ENCODE measurements at regions of chr22 and their contacts with region 1.

Region 1: GRCh38 chr22:36180038-36180880 is 19.7 kb upstream of the APOL3 start:
- DNase-seq: peak; percentile 75 to 82 (median 80)
- H3K4me3 ChIP-seq: no peak overlapping the region
- H3K4me3 Mint-ChIP-seq: no peak overlapping the region
- H3K27ac ChIP-seq: no peak overlapping the region
- H3K27ac Mint-ChIP-seq: peak overlapping the region in 6 of 7 donors; percentile 19 to 86 (median 54)
- H3K4me1 ChIP-seq: peaks cover 5% of the 10 kb centered on the region
- H3K4me1 Mint-ChIP-seq: peaks cover 0 to 6% (median 3%) of the 10 kb centered on the region in 4 donors
- H3K27me3 ChIP-seq: no peaks in the 10 kb centered on the region
- H3K27me3 Mint-ChIP-seq: peaks cover 2 to 3% of the 10 kb centered on the region in 2 donors

Region 2: DNA sequence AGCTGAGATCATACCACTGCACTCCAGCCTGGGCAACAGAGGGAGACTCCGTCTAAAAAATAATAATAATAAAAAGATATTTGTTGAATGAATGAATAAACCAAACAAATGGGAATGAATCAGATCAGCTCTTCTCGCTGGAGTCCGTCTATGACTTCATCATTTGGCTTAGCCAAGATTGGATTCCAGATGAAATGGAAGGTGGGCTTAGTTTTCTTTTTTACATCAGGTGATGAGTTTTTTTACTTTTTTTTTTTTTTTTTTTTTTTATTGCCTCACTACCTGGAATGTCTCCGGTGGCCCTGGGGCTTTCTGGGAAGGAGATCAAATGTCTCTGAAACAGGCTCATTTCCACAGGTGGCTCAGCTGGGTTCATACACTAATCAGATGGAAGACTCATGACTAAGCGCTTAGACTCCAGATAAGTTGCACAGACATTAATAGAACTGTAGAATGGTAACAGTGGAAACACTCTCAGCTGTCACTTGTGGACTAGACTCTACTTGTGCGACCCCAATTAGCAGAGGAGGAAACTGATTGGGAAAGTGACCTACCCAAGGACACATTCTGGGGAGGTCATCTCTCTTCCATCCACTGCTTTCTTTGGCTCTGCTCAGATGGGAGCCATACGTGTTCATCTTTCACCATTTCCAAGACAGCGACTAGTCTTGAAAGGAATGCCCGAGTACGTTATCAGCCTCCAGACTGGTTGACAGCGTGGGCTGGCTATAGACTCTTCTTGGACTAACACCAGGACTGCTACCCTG is 131.2 kb before region 1 on chr22:
- CTCF ChIA-PET with region 1: no interaction called
- POLR2A ChIA-PET with region 1: no interaction called
- intact Hi-C with region 1: no loop called
- DNase-seq: no peak
- H3K4me3 ChIP-seq: no peak overlapping the region
- H3K4me3 Mint-ChIP-seq: no peak overlapping the region
- H3K27ac ChIP-seq: no peak overlapping the region
- H3K27ac Mint-ChIP-seq: peak overlapping the region in 1 of 7 donors; percentile 37
- H3K4me1 ChIP-seq: no peaks in the 10 kb centered on the region
- H3K4me1 Mint-ChIP-seq: peaks cover 0 to 2% (median under 1%) of the 10 kb centered on the region in 4 donors
- H3K27me3 ChIP-seq: no peaks in the 10 kb centered on the region
- H3K27me3 Mint-ChIP-seq: peaks cover 5 to 12% of the 10 kb centered on the region in 2 donors

Region 3: GRCh38 chr22:36123673-36124630 is 56.3 kb before region 1 on chr22:
- CTCF ChIA-PET with region 1: interaction called, 11 read pairs
- POLR2A ChIA-PET with region 1: no interaction called
- intact Hi-C with region 1: no loop called
- DNase-seq: peak; percentile 90 to 93 (median 92)
- H3K4me3 ChIP-seq: peak overlapping the region in 1 of 2 donors; percentile 59
- H3K4me3 Mint-ChIP-seq: peak overlapping the region; percentile 72 to 84 (median 80)
- H3K27ac ChIP-seq: peak overlapping the region; percentile 37
- H3K27ac Mint-ChIP-seq: peak overlapping the region; percentile 66 to 98 (median 93)
- H3K4me1 ChIP-seq: peaks cover 11% of the 10 kb centered on the region
- H3K4me1 Mint-ChIP-seq: peaks cover 3 to 18% (median 9%) of the 10 kb centered on the region in 4 donors
- H3K27me3 ChIP-seq: no peaks in the 10 kb centered on the region
- H3K27me3 Mint-ChIP-seq: no peaks in the 10 kb centered on the region

Region 4: GRCh38 chr22:36144886-36145541 is 35.2 kb before region 1 on chr22:
- CTCF ChIA-PET with region 1: interaction called, 63 read pairs
- POLR2A ChIA-PET with region 1: interaction called, 5 read pairs
- intact Hi-C with region 1: loop called (anchors 1 kb)
- DNase-seq: peak in 1 of 5 donors; percentile 26
- H3K4me3 ChIP-seq: no peak overlapping the region
- H3K4me3 Mint-ChIP-seq: no peak overlapping the region
- H3K27ac ChIP-seq: no peak overlapping the region
- H3K27ac Mint-ChIP-seq: peak overlapping the region; percentile 74 to 83 (median 79)
- H3K4me1 ChIP-seq: peaks cover 14% of the 10 kb centered on the region
- H3K4me1 Mint-ChIP-seq: peaks cover 16 to 63% (median 40%) of the 10 kb centered on the region in 4 donors
- H3K27me3 ChIP-seq: no peaks in the 10 kb centered on the region
- H3K27me3 Mint-ChIP-seq: no peaks in the 10 kb centered on the region

Region 5: GRCh38 chr22:36151006-36151595 is 29.2 kb before region 1 on chr22:
- CTCF ChIA-PET with region 1: interaction called, 23 read pairs
- POLR2A ChIA-PET with region 1: interaction called, 39 read pairs
- intact Hi-C with region 1: no loop called
- DNase-seq: no peak
- H3K4me3 ChIP-seq: no peak overlapping the region
- H3K4me3 Mint-ChIP-seq: peak overlapping the region in 6 of 8 donors; percentile 33 to 71 (median 60)
- H3K27ac ChIP-seq: no peak overlapping the region
- H3K27ac Mint-ChIP-seq: peak overlapping the region; percentile 53 to 92 (median 72)
- H3K4me1 ChIP-seq: peaks cover 75% of the 10 kb centered on the region
- H3K4me1 Mint-ChIP-seq: peaks cover 53 to 87% (median 70%) of the 10 kb centered on the region in 4 donors
- H3K27me3 ChIP-seq: no peaks in the 10 kb centered on the region
- H3K27me3 Mint-ChIP-seq: no peaks in the 10 kb centered on the region

Region 6: DNA sequence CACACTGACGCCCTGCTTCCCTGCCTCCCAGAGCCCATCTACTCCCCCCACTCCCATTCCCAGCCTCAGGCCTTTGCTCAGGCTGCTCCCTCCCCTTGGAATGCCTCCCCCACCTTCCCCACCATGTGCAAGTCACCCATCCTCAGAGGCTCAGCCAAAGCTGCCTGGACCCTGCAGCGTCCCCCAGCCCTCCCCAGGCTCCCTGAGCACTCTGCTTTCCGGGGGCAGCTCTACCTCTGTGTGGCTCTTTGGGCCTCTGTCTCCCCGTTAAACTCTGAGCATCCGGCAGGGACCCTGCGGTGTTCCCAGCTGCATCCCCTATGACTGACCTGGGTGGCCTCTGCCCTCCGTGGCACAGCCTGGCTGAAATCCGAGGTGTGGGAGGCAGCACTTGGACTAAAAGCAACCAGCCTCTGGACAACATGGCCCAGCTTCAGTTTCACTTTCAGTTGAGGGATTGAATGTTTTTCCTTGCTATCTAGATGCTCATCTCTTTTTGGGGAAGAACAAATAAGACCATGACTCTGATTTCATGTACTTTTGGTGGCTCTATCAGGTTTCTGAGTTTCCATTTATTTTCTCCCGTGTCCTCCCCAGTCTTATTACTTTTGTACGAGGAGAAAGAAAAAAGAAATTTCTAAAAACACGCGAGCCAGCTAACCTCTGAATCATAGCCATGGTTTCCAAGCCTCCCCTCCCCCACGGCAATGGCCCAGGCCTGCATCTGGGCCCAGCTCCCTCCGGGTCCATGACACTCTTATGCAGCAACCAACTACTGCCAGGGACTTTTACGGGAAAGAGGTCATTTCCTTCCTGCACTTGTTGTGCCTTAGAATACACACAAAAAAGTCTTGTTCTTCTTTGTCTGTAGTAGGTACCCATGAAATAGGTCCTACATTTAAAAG is 23.5 kb before region 1 on chr22:
- CTCF ChIA-PET with region 1: interaction called, 33 read pairs
- POLR2A ChIA-PET with region 1: interaction called, 39 read pairs
- intact Hi-C with region 1: no loop called
- DNase-seq: peak; percentile 67 to 91 (median 69)
- H3K4me3 ChIP-seq: peak overlapping the region; percentile 50 to 75
- H3K4me3 Mint-ChIP-seq: peak overlapping the region; percentile 90 to 99 (median 92)
- H3K27ac ChIP-seq: peak overlapping the region; percentile 95
- H3K27ac Mint-ChIP-seq: peak overlapping the region; percentile 92 to 98 (median 97)
- H3K4me1 ChIP-seq: peaks cover 81% of the 10 kb centered on the region
- H3K4me1 Mint-ChIP-seq: peaks cover 71 to 99% (median 87%) of the 10 kb centered on the region in 4 donors
- H3K27me3 ChIP-seq: no peaks in the 10 kb centered on the region
- H3K27me3 Mint-ChIP-seq: no peaks in the 10 kb centered on the region

Region 7: DNA sequence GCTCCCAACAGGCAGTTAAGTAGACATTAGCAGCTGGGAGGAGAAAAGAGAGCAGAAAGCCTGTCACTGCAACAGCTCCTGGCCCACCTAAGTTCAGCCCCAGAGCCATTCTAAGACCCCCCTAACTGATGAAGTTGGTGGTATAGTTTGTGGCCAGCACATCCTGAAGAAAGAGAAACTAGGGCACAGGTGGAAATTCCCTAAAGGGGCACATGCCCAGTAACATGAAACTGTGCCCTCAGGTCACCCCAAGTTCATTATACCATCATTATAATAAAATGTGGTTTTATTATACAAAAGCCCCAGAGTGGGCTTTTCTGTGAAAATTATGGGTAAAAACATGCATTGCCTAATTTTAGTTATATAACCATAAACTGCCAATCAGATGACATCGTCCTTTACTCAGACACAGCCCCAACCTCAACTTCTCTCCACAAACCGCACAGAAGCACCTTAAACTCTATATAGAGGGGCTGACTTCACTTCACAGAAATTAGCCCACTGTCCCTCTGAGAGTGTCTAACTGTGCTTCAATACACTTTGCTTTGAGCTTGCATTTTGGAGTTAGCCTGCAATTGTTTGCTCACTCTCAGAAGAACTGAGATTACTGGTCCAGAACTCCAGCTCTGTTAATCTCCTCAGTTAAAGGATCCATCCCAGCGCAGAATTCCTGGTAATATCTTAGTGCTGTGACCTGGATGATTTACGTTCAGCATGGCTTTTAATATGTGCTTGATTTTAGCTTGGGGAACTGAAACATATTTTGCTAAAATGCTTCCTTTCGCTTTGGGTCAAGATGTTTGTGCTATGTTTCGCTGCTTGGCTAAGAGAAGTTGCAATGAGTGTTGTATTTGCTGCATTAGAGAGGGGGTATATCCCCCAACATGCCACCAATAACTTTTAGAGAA is 17.9 kb before region 1 on chr22:
- CTCF ChIA-PET with region 1: interaction called, 49 read pairs
- POLR2A ChIA-PET with region 1: interaction called, 39 read pairs
- intact Hi-C with region 1: loop called (anchors 1 kb)
- DNase-seq: peak; percentile 66 to 87 (median 72)
- H3K4me3 ChIP-seq: peak overlapping the region in 1 of 2 donors; percentile 71
- H3K4me3 Mint-ChIP-seq: peak overlapping the region; percentile 90 to 99 (median 98)
- H3K27ac ChIP-seq: peak overlapping the region; percentile 95
- H3K27ac Mint-ChIP-seq: peak overlapping the region; percentile 92 to 99 (median 98)
- H3K4me1 ChIP-seq: peaks cover 68% of the 10 kb centered on the region
- H3K4me1 Mint-ChIP-seq: peaks cover 58 to 97% (median 79%) of the 10 kb centered on the region in 4 donors
- H3K27me3 ChIP-seq: no peaks in the 10 kb centered on the region
- H3K27me3 Mint-ChIP-seq: no peaks in the 10 kb centered on the region

Region 8: GRCh38 chr22:36194971-36195370 is 14.7 kb after region 1 on chr22:
- CTCF ChIA-PET with region 1: interaction called, 14 read pairs
- POLR2A ChIA-PET with region 1: no interaction called
- intact Hi-C with region 1: no loop called
- DNase-seq: peak in 4 of 5 donors; percentile 28 to 32 (median 30)
- H3K4me3 ChIP-seq: no peak overlapping the region
- H3K4me3 Mint-ChIP-seq: no peak overlapping the region
- H3K27ac ChIP-seq: no peak overlapping the region
- H3K27ac Mint-ChIP-seq: no peak overlapping the region
- H3K4me1 ChIP-seq: no peaks in the 10 kb centered on the region
- H3K4me1 Mint-ChIP-seq: peaks cover 2 to 22% (median 6%) of the 10 kb centered on the region in 4 donors
- H3K27me3 ChIP-seq: no peaks in the 10 kb centered on the region
- H3K27me3 Mint-ChIP-seq: peaks cover 4 to 8% of the 10 kb centered on the region in 2 donors

Region 9: DNA sequence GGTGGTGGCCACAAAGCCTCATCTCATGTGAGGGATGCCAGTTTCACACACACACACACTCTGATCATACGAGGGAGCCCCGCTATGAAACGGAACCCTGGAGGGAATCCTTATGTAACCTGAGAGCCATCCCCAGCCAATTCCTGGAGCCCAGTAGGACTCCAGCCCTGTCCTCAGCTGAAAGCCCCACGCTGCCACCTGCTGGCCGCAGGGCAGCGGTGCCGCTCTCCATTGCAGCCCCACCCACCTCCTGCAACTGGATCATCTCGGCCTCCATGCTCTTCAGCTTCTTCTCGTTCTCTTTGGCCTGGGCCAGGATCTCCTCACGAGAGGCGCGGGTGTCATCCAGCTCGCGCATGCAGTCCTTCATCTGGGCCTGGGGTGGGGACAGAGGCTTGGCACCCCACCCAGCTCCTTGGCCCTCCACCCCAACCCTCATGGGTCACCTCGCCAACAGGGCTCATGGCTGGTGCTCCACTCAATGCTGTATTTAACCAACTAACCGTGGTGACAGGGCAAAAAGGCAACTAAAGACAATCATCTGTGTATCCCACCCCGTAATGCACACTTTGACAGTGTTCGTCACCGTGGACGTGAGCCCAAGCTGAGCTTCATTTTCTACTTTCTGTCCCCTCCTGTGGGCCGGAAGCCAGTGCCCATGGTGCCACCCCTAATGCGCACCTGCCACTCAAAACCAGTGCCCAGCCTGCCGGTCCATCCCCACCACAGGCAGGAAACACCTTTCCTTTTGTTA is 106.4 kb after region 1 on chr22:
- CTCF ChIA-PET with region 1: no interaction called
- POLR2A ChIA-PET with region 1: no interaction called
- intact Hi-C with region 1: no loop called
- DNase-seq: peak in 4 of 5 donors; percentile 56 to 68 (median 60)
- H3K4me3 ChIP-seq: no peak overlapping the region
- H3K4me3 Mint-ChIP-seq: peak overlapping the region in 6 of 8 donors; percentile 29 to 73 (median 56)
- H3K27ac ChIP-seq: peak overlapping the region; percentile 10
- H3K27ac Mint-ChIP-seq: peak overlapping the region; percentile 83 to 94 (median 89)
- H3K4me1 ChIP-seq: peaks cover 43% of the 10 kb centered on the region
- H3K4me1 Mint-ChIP-seq: peaks cover 20 to 48% (median 34%) of the 10 kb centered on the region in 4 donors
- H3K27me3 ChIP-seq: no peaks in the 10 kb centered on the region
- H3K27me3 Mint-ChIP-seq: no peaks in the 10 kb centered on the region